Activated B cell treated with CpG ODN at 0.5 μM for 24 hours (primary cell): ENCODE measurements at regions of chr2 and their contacts with region 1.

Region 1: GRCh38 chr2:213065583-213066442 is 85.6 kb downstream of the IKZF2 start:
- DNase-seq: no peak
- ATAC-seq: peak; percentile 67
- H3K4me3 Mint-ChIP-seq: peak overlapping the region; percentile 71
- H3K27ac Mint-ChIP-seq: peak overlapping the region; percentile 21
- H3K4me1 Mint-ChIP-seq: peaks cover 26% of the 10 kb centered on the region
- H3K27me3 Mint-ChIP-seq: no peaks in the 10 kb centered on the region
- CTCF ChIP-seq: no peak

Region 2: GRCh38 chr2:213046431-213046830 is 19.4 kb before region 1 on chr2:
- CTCF ChIA-PET with region 1: no interaction called
- POLR2A ChIA-PET with region 1: no interaction called
- intact Hi-C with region 1: loop called (anchors 2 kb)
- DNase-seq: no peak
- ATAC-seq: no peak
- H3K4me3 Mint-ChIP-seq: no peak overlapping the region
- H3K27ac Mint-ChIP-seq: no peak overlapping the region
- H3K4me1 Mint-ChIP-seq: peaks cover 4% of the 10 kb centered on the region
- H3K27me3 Mint-ChIP-seq: no peaks in the 10 kb centered on the region
- CTCF ChIP-seq: no peak

Region 3: GRCh38 chr2:213086571-213086970 is 20.8 kb after region 1 on chr2:
- CTCF ChIA-PET with region 1: no interaction called
- POLR2A ChIA-PET with region 1: no interaction called
- intact Hi-C with region 1: loop called (anchors 2 kb)
- DNase-seq: no peak
- ATAC-seq: no peak
- H3K4me3 Mint-ChIP-seq: no peak overlapping the region
- H3K27ac Mint-ChIP-seq: no peak overlapping the region
- H3K4me1 Mint-ChIP-seq: peaks cover 11% of the 10 kb centered on the region
- H3K27me3 Mint-ChIP-seq: no peaks in the 10 kb centered on the region
- CTCF ChIP-seq: no peak

Region 4: DNA sequence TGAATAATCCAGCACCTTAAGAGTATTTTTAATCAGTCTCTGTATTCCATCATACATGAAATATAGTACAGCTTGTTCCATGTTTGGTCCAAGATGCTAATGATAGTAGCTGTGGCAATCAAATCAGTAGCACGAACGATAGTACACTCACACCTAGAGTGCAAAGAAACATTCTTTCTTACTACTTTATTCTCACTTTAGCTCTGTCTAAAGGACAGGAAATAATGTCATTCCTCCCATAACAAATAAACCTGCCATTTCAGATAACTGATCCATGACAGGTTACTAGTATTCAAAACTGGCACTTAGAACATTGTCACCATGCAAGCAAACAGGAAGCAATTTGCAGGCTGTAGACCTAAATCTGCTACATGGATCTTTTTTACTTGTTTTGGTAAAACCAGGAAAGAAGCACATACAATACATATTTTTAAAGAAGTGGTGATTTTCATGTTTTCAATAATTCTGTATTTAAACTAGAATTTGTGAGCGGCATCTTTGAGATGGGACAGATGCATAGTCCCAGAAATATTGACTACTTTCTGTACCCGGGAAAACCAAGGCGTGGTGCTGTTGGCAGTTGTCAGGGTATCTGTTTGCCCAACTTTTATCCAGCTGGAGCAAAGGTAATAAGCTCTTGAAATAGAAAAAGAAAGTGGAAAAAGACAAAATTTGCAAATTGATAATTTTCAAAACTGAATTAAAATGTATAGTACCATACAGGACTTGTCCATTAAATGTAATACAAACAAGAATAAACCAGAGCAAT is 36.1 kb after region 1 on chr2:
- CTCF ChIA-PET with region 1: no interaction called
- POLR2A ChIA-PET with region 1: no interaction called
- intact Hi-C with region 1: loop called (anchors 5 kb)
- DNase-seq: no peak
- ATAC-seq: no peak
- H3K4me3 Mint-ChIP-seq: no peak overlapping the region
- H3K27ac Mint-ChIP-seq: no peak overlapping the region
- H3K4me1 Mint-ChIP-seq: peaks cover 38% of the 10 kb centered on the region
- H3K27me3 Mint-ChIP-seq: no peaks in the 10 kb centered on the region
- CTCF ChIP-seq: no peak